ENCODE measurements at regions of chr16 and their contacts with region 1.

Region 1: GRCh38 chr16:66364117-66364967 is 2.1 kb upstream of the CDH5 start:
- DNase-seq: peak; percentile 72 to 86 (median 76)
- ATAC-seq: peak; percentile 18 to 52 (median 40)
- H3K4me3 ChIP-seq: peak overlapping the region in 3 of 12 donors; percentile 7 to 19 (median 10)
- H3K27ac ChIP-seq: peak overlapping the region; percentile 35 to 95 (median 81)
- H3K4me1 ChIP-seq: peaks cover under 1 to 68% (median 39%) of the 10 kb centered on the region in 12 donors
- H3K27me3 ChIP-seq: peaks cover 0 to 6% (median 0%) of the 10 kb centered on the region in 9 donors
- CTCF ChIP-seq: no peak
- POLR2A ChIP-seq: no peak

Region 2: DNA sequence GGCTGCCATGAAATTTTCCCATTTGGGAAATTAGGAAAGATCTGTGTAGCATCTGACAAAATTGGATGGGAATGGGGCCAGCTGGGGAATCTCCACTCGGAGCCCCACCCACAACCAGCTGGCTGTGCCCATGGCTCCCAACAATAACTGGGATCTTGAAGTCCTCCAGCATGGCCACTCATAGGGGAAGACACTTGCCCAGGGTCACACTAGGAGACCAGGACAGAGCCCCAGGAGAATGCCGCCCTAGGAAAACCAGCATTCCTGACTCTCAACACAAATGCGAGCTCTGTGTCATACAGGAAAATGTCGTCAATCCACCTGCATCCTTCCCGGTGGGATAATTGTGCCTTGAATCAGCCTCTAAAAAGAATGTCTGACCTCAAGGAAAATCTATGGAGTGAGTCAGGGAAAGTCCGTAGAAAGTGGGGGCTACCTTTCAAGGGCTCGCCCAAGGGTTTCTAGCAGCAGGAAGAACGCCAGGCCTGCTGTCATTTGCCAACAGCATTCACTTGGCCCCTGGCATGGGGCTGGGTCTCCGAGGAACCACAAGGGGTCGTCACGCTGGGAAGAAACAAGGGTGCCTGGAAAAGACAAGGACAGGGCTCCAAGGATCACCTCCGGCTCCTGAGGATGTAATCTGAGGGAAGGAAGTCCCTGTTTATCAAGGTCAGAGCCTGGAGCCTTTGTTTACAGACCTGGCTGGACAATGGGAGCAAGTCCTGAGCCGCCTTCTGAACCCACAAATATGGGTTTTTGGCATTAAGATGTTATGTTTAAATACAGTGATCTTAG is 18.0 kb after region 1 on chr16:
- intact Hi-C with region 1: loop called in 2 of 10 experiments (anchors 1 to 2 kb)
- DNase-seq: peak in 3 of 5 donors; percentile 50 to 64 (median 60)
- ATAC-seq: peak; percentile 53 to 91 (median 76)
- H3K4me3 ChIP-seq: peak overlapping the region in 4 of 12 donors; percentile 3 to 6 (median 4)
- H3K27ac ChIP-seq: peak overlapping the region; percentile 59 to 88 (median 80)
- H3K4me1 ChIP-seq: peaks cover 0 to 51% (median 23%) of the 10 kb centered on the region in 12 donors
- H3K27me3 ChIP-seq: no peaks in the 10 kb centered on the region
- CTCF ChIP-seq: peak in 4 of 12 donors; percentile 13 to 19 (median 18)
- POLR2A ChIP-seq: no peak

Region 3: GRCh38 chr16:66399930-66400329 is 35.6 kb after region 1 on chr16:
- intact Hi-C with region 1: loop called in 3 of 10 experiments (anchors 2 to 5 kb)
- DNase-seq: peak in 4 of 5 donors; percentile 60 to 77 (median 70)
- ATAC-seq: peak; percentile 25 to 76 (median 52)
- H3K4me3 ChIP-seq: no peak overlapping the region
- H3K27ac ChIP-seq: peak overlapping the region in 6 of 12 donors; percentile 12 to 80 (median 61)
- H3K4me1 ChIP-seq: peaks cover 0 to 33% (median 13%) of the 10 kb centered on the region in 12 donors
- H3K27me3 ChIP-seq: no peaks in the 10 kb centered on the region
- CTCF ChIP-seq: no peak
- POLR2A ChIP-seq: no peak

Region 4: GRCh38 chr16:66516808-66517585 is 152.7 kb after region 1 on chr16:
- intact Hi-C with region 1: loop called in 1 of 10 experiments (anchors 1 kb)
- DNase-seq: peak; percentile 97 to 99 (median 98)
- ATAC-seq: peak; percentile 95 to 96 (median 96)
- H3K4me3 ChIP-seq: peak overlapping the region in 10 of 12 donors; percentile 21 to 50 (median 30)
- H3K27ac ChIP-seq: peak overlapping the region; percentile 89 to 100 (median 97)
- H3K4me1 ChIP-seq: peaks cover 18 to 87% (median 67%) of the 10 kb centered on the region in 12 donors
- H3K27me3 ChIP-seq: no peaks in the 10 kb centered on the region
- CTCF ChIP-seq: no peak
- POLR2A ChIP-seq: peak in 1 of 2 donors; percentile 69

Region 5: GRCh38 chr16:66552286-66553177 is 188.2 kb after region 1 on chr16 and contains the start of gene CKLF:
- intact Hi-C with region 1: loop called in 1 of 10 experiments (anchors 5 kb)
- DNase-seq: peak; percentile 88 to 96 (median 91)
- ATAC-seq: peak; percentile 77 to 91 (median 84)
- H3K4me3 ChIP-seq: peak within 1 kb of the TSS; percentile 49 to 78 (median 64)
- H3K27ac ChIP-seq: peak within 1 kb of the TSS; percentile 84 to 99 (median 93)
- H3K4me1 ChIP-seq: peaks cover 0 to 81% (median 45%) of the 10 kb centered on the region in 12 donors
- H3K27me3 ChIP-seq: no peaks in the 10 kb centered on the region
- CTCF ChIP-seq: no peak
- POLR2A ChIP-seq: peak in 1 of 2 donors; percentile 77
- total RNA-seq, gene CKLF: 4.1 to 28.9 (median 6.4) TPM